Left colon (tissue), 2 donors: ENCODE measurements at regions of chr11 and their contacts with region 1.

Region 1: DNA sequence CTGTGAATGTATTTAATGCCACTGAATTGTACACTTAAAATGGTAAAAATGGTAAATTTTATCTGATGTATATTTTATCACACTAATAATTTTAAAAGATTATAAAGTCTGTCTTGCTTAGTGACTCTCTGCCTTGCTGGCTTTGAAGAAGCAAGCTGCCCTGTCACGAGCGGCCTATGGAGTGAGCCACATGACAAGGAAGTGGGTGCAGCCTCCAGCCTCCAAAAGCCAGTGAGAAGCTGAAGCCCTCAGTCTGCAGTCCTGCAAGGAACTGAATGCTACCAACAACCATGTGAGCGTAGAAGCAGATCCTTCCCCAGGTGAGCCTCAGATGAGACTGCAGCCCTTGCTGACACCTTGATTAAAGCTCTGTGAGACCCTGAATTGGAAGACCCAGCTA is 20.0 kb downstream of the C11orf24 start:
- DNase-seq: no peak
- ATAC-seq: no peak

Region 2: GRCh38 chr11:68447015-68447801 is 195.4 kb after region 1 on chr11:
- intact Hi-C with region 1: loop called (anchors 5 to 10 kb)
- DNase-seq: peak; percentile 64 to 83
- ATAC-seq: peak; percentile 90